ENCODE measurements at regions of chr20 and their contacts with region 1.

Region 1: GRCh38 chr20:51639206-51639832 is 96.8 kb upstream of the NFATC2 start:
- DNase-seq: peak; percentile 74 to 79
- ATAC-seq: peak; percentile 90 to 93
- H3K4me3 ChIP-seq: no peak overlapping the region
- H3K27ac ChIP-seq: peak overlapping the region; percentile 50 to 78; a peak in 5 of 6 replicates
- H3K4me1 ChIP-seq: peaks cover 13% of the 10 kb centered on the region; the same call in 1 of the 3 replicates
- CTCF ChIP-seq: peak; percentile 92
- EP300 ChIP-seq: no peak
- POLR2A ChIP-seq: no peak
- RAD21 ChIP-seq: peak; percentile 97 to 98

Region 2: GRCh38 chr20:51650685-51651134 is 11.4 kb after region 1 on chr20:
- CTCF ChIA-PET with region 1: interaction called, 20 read pairs
- POLR2A ChIA-PET with region 1: interaction called, 4 read pairs
- DNase-seq: no peak
- ATAC-seq: peak; percentile 35 to 64; a peak in 2 of 6 replicates
- H3K4me3 ChIP-seq: no peak overlapping the region
- H3K27ac ChIP-seq: peak overlapping the region; percentile 42 to 70
- H3K4me1 ChIP-seq: peaks cover 8% of the 10 kb centered on the region; the same call in 2 of the 3 replicates
- CTCF ChIP-seq: no peak
- EP300 ChIP-seq: no peak
- POLR2A ChIP-seq: no peak
- RAD21 ChIP-seq: no peak

Region 3: GRCh38 chr20:51738947-51739456 is 99.7 kb after region 1 on chr20:
- CTCF ChIA-PET with region 1: no interaction called
- POLR2A ChIA-PET with region 1: no interaction called
- DNase-seq: peak in 1 of 2 experiments; percentile 35
- ATAC-seq: no peak
- H3K4me3 ChIP-seq: no peak overlapping the region
- H3K27ac ChIP-seq: peak overlapping the region in 1 of 2 experiments; percentile 26; a peak in 3 of 6 replicates
- H3K4me1 ChIP-seq: peaks cover 40% of the 10 kb centered on the region
- CTCF ChIP-seq: no peak
- EP300 ChIP-seq: no peak
- POLR2A ChIP-seq: no peak
- RAD21 ChIP-seq: no peak

Region 4: GRCh38 chr20:51828467-51829161 is 189.3 kb after region 1 on chr20:
- CTCF ChIA-PET with region 1: no interaction called
- POLR2A ChIA-PET with region 1: no interaction called
- DNase-seq: no peak
- ATAC-seq: no peak
- H3K4me3 ChIP-seq: no peak overlapping the region
- H3K27ac ChIP-seq: no peak overlapping the region
- H3K4me1 ChIP-seq: no peaks in the 10 kb centered on the region
- CTCF ChIP-seq: no peak
- EP300 ChIP-seq: no peak
- POLR2A ChIP-seq: no peak
- RAD21 ChIP-seq: no peak

Region 5: GRCh38 chr20:52060794-52061714 is 421.7 kb after region 1 on chr20:
- CTCF ChIA-PET with region 1: interaction called, 14 read pairs
- POLR2A ChIA-PET with region 1: no interaction called
- DNase-seq: peak; percentile 20 to 70
- ATAC-seq: peak; percentile 81
- H3K4me3 ChIP-seq: no peak overlapping the region
- H3K27ac ChIP-seq: peak overlapping the region in 1 of 2 experiments; percentile 53; a peak in 2 of 6 replicates
- H3K4me1 ChIP-seq: no peaks in the 10 kb centered on the region
- CTCF ChIP-seq: peak; percentile 42; the same call in 2 of the 3 replicates
- EP300 ChIP-seq: no peak
- POLR2A ChIP-seq: no peak
- RAD21 ChIP-seq: peak; percentile 69 to 73

Region 6: DNA sequence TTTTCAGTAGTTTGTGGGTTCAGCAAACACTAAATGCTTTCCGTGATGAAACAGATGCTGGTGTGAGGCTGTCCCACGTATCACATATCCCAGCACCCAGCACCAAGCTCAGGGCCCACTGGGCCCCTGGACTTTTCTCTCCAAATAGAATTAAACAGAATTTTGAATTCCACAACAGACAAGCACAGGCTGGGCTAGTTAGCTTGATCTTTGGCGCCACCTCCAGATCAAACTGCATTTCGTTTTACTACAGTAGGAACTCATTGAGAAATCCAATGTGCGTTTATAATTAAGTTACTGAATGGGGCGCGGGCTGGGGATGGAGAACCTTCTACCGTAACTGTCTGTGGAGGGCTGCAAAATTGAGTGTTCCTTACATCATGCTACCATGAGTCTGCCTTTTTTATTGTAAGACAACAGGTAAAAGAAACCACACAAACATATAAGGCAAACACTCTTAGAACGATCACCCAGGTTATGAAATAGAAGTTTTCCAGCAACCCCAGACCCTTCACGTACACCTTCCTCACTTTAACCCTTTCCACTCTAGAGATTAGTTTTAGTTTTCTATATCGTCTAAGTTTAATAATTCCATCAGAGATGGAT is 444.4 kb after region 1 on chr20:
- CTCF ChIA-PET with region 1: interaction called, 67 read pairs
- POLR2A ChIA-PET with region 1: no interaction called
- DNase-seq: peak; percentile 63 to 69
- ATAC-seq: peak; percentile 79 to 88
- H3K4me3 ChIP-seq: no peak overlapping the region
- H3K27ac ChIP-seq: no peak overlapping the region
- H3K4me1 ChIP-seq: 0 out of 3 replicates have a peak, but pooled peaks cover 3% of the 10 kb centered on the region
- CTCF ChIP-seq: peak; percentile 80
- EP300 ChIP-seq: no peak
- POLR2A ChIP-seq: no peak
- RAD21 ChIP-seq: peak; percentile 93 to 95

Measured in A549 (cell line).